Ovary (tissue), 10 donors: ENCODE measurements at regions of chr7 and their contacts with region 1.

Region 1: DNA sequence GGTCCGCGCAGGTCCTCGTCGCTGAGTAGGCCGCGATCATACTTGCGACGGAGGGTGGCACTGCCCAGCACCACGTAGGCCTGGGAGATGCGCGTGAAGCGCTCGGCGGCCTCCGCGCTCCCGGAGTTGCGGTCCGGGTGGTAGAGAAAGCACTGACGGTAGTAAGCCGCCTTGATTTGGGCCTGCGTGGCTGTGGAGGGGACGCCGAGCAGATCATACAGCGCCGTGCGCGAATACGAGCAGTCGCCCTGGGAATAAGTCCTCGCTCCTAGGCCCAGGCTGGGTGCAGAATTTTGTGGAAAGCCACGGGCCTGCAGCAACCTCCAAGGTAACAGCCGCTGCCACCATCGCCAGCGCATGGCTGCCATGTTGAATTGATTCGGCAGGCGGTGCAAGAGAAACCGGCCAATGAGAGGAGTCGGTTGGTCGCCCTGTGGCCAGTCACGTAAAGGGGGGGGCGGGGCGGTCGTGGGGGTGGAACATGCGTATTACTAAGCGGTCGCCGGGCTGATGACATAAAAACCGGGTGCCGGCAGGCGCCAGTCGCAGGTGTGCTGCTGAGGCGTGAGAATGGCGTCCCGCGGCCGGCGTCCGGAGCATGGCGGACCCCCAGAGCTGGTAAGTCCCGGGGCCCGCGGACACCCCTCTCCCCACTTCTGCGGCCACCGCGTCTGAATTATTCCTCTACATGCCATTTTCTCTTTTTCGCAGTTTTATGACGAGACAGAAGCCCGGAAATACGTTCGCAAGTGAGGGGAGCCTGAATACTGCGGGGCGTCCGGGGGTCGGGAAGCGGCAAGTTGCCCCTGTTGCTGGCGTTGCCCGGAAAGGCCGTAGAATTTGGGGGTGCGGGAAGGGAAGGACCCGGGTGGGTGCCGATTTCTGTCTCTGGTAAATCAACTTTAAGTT is at the starts of genes BUD23 and DNAJC30:
- DNase-seq: peak; percentile 96 to 98 (median 97)
- H3K4me3 ChIP-seq: peak within 1 kb of the TSS; percentile 89
- H3K27ac ChIP-seq: peak within 1 kb of the TSS; percentile 6 to 72
- H3K4me1 ChIP-seq: peaks cover 17% of the 10 kb centered on the region
- H3K27me3 ChIP-seq: no peaks in the 10 kb centered on the region
- CTCF ChIP-seq: peak in 2 of 3 donors; percentile 20 to 25
- EP300 ChIP-seq: no peak
- POLR2A ChIP-seq: peak; percentile 56
- total RNA-seq, gene BUD23: 19.8 to 62.9 (median 53.3) TPM
- total RNA-seq, gene DNAJC30: 7.1 to 16.1 (median 13.0) TPM

Region 2: DNA sequence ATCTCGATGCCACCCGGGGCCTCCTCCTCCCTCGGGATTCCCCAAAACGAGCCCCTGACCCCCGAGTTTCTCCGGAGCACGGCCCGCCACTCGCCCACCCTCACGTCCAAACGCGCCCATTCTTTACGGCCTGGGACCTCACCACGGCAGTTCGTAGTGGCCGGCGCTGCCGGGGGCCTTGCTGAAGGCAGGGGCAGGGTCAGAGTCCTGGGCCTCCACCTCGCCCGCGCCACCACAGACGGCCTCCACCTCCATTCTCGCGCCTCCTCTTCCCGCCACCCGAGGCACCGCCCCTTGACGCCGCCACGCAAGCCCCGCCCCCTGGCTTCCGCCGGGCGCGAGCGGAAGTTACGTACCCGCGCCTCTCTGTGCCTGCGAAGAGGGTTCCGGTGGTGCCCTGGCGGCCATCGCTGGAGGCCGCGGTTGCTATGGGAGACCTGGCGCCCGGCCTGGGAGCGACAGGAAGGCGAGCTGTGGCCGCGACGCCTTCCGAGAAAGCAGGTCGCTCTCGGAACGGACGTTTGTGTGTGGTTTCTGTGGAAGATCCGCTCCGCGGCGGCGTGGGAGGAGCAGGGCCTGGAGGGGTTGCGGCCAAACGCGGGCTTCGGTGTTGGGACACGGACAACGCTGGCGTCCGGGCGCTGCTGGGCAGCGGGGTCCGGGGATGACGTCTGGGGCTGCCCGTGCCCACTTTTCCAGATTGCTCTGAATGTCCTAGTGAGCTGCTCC is 571.0 kb after region 1 on chr7 and contains the start of gene RFC2:
- intact Hi-C with region 1: loop called in 1 of 4 experiments (anchors 10 kb)
- DNase-seq: peak; percentile 94 to 99 (median 97)
- H3K4me3 ChIP-seq: peak within 1 kb of the TSS; percentile 79
- H3K27ac ChIP-seq: peak within 1 kb of the TSS; percentile 18 to 84
- H3K4me1 ChIP-seq: peaks cover 5% of the 10 kb centered on the region
- H3K27me3 ChIP-seq: no peaks in the 10 kb centered on the region
- CTCF ChIP-seq: peak; percentile 24 to 87 (median 85)
- EP300 ChIP-seq: peak; percentile 89
- POLR2A ChIP-seq: peak; percentile 92
- total RNA-seq, gene RFC2: 6.4 to 20.3 (median 14.1) TPM

Region 3: DNA sequence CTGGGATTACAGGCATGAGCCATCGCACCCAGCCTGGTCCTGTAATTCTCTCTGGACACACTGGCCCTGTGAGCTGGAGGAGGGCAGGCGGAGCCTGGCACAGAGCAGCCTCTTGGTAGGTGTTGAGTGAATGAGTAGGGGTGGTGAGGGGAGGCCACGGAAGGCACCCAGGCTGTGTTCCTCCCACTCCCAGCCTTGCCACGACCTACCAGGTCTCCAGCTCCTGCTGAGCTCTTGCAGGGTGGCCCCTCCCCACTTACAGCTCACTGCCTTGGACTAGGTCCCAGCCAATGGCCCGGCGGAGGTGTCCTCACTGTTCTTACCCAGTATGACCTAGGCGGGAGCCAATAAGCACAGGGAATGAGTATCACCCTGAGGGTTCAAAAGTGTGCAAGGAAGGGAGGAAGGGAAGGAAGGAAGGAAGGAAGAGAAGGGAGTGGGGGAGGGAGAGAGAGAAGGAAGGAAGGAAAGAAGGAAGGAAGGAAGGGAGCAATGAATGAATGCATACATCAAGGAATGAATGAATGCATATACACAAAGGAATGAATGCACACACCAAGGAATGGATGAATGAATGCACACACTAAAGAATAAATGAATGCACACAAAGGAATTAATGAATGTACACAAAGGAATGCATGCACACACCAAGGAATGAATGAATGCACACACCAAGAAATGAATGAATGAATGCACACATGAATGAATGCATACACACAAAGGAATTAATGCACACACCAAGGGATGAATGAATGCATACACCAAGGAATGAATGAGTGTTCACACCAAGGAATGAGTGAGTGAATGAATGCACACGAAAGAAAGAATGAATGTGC is 815.9 kb after region 1 on chr7:
- intact Hi-C with region 1: loop called in 1 of 4 experiments (anchors 10 kb)
- DNase-seq: no peak
- H3K4me3 ChIP-seq: no peak overlapping the region
- H3K27ac ChIP-seq: no peak overlapping the region
- H3K4me1 ChIP-seq: peaks cover 5% of the 10 kb centered on the region
- H3K27me3 ChIP-seq: no peaks in the 10 kb centered on the region
- CTCF ChIP-seq: no peak
- EP300 ChIP-seq: no peak
- POLR2A ChIP-seq: no peak